ENCODE measurements at regions of chr5 and their contacts with region 1.

Region 1: DNA sequence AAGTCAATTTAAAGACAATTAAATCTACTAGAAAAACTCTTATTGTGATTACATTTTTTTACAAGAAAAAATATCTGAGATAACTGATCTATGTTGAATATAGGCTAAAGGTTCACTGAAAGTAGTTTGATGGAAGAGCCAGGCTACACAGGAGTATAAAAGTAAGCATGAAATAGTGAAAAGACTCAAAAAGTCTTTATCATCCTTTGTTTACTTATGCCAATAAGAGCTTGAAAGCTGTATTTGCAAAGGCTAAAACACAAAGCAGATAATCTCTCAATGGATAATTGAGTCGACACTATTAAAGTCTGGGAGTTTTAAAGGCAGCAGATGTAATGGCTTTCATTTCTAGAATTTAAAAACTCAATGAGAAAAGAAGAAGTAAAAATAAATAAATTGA is 42.0 kb downstream of the SSBP2 start:
- DNase-seq: no peak
- ATAC-seq: no peak
- H3K4me3 ChIP-seq: no peak overlapping the region
- H3K27ac ChIP-seq: no peak overlapping the region
- H3K4me1 ChIP-seq: no peaks in the 10 kb centered on the region
- H3K27me3 ChIP-seq: no peaks in the 10 kb centered on the region
- CTCF ChIP-seq: no peak
- EP300 ChIP-seq: no peak
- POLR2A ChIP-seq: no peak
- RAD21 ChIP-seq: no peak

Region 2: GRCh38 chr5:81572201-81572600 is 136.7 kb before region 1 on chr5:
- CTCF ChIA-PET with region 1: no interaction called
- POLR2A ChIA-PET with region 1: no interaction called
- RAD21 ChIA-PET with region 1: no interaction called
- SMC1A ChIA-PET with region 1: no interaction called
- in situ Hi-C with region 1: no loop called
- intact Hi-C with region 1: no loop called
- DNase-seq: no peak
- ATAC-seq: no peak
- H3K4me3 ChIP-seq: no peak overlapping the region
- H3K27ac ChIP-seq: no peak overlapping the region
- H3K4me1 ChIP-seq: no peaks in the 10 kb centered on the region
- H3K27me3 ChIP-seq: no peaks in the 10 kb centered on the region
- CTCF ChIP-seq: no peak
- EP300 ChIP-seq: no peak
- POLR2A ChIP-seq: no peak
- RAD21 ChIP-seq: no peak

Region 3: DNA sequence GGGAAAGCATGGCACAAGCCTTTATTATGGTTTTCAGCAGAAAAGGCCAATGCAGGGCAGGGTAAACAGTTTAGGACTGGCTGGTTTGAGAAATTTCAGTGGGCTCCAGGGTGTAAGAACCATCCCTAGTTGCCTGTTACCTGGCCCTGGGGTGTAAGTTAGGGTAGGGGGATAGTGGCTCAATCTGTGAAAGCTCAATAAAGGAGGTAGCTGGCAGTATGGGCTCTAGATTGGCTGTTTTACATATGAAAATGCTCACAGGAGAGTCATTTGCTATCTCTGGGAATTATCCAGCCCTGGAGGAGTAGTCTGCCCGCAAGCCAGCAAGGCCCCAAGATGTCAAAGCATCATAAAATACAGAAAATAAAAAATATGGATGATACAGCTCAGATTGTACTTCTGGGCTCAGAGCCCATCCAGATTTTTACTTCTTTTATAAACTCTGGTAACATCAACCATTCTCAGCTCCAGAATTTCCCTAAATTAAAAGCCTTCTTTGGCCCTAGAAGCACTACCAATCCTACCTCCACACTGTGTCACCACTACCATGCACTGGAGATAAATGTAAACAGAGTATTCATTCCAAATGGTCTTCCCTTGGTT is 11.0 kb after region 1 on chr5:
- CTCF ChIA-PET with region 1: interaction called, 5 read pairs
- POLR2A ChIA-PET with region 1: interaction called, 4 read pairs
- RAD21 ChIA-PET with region 1: interaction called, 4 read pairs
- SMC1A ChIA-PET with region 1: interaction called, 12 read pairs
- in situ Hi-C with region 1: no loop called
- intact Hi-C with region 1: no loop called
- DNase-seq: no peak
- ATAC-seq: no peak
- H3K4me3 ChIP-seq: no peak overlapping the region
- H3K27ac ChIP-seq: no peak overlapping the region
- H3K4me1 ChIP-seq: peaks cover 9% of the 10 kb centered on the region; the same call in 1 of the 2 replicates
- H3K27me3 ChIP-seq: no peaks in the 10 kb centered on the region
- CTCF ChIP-seq: no peak
- EP300 ChIP-seq: no peak
- POLR2A ChIP-seq: no peak
- RAD21 ChIP-seq: no peak

Region 4: GRCh38 chr5:81805086-81805485 is 96.2 kb after region 1 on chr5:
- CTCF ChIA-PET with region 1: no interaction called
- POLR2A ChIA-PET with region 1: no interaction called
- RAD21 ChIA-PET with region 1: no interaction called
- SMC1A ChIA-PET with region 1: no interaction called
- in situ Hi-C with region 1: no loop called
- intact Hi-C with region 1: no loop called
- DNase-seq: no peak
- ATAC-seq: no peak; the same call in 2 of the 3 replicates
- H3K4me3 ChIP-seq: no peak overlapping the region
- H3K27ac ChIP-seq: no peak overlapping the region
- H3K4me1 ChIP-seq: no peaks in the 10 kb centered on the region
- H3K27me3 ChIP-seq: no peaks in the 10 kb centered on the region
- CTCF ChIP-seq: no peak
- EP300 ChIP-seq: no peak
- POLR2A ChIP-seq: no peak
- RAD21 ChIP-seq: no peak

Measured in GM12878 (cell line).